ENCODE measurements at regions of chr7 and their contacts with region 1.

Region 1: GRCh38 chr7:73738612-73739374 is at the start of gene ABHD11:
- DNase-seq: peak; percentile 95
- H3K4me3 Mint-ChIP-seq: peak within 1 kb of the TSS; percentile 94
- H3K27ac Mint-ChIP-seq: peak within 1 kb of the TSS; percentile 93
- H3K4me1 Mint-ChIP-seq: peaks cover 14% of the 10 kb centered on the region
- H3K27me3 Mint-ChIP-seq: peaks cover 2% of the 10 kb centered on the region
- total RNA-seq, gene ABHD11: 18.9 and 24.3 TPM in 2 replicates

Region 2: GRCh38 chr7:73522105-73522872 is 216.5 kb before region 1 on chr7 and contains the start of gene BAZ1B:
- intact Hi-C with region 1: loop called (anchors 1 kb)
- DNase-seq: peak; percentile 97
- H3K4me3 Mint-ChIP-seq: peak within 1 kb of the TSS; percentile 91
- H3K27ac Mint-ChIP-seq: peak within 1 kb of the TSS; percentile 97
- H3K4me1 Mint-ChIP-seq: peaks cover 60% of the 10 kb centered on the region
- H3K27me3 Mint-ChIP-seq: no peaks in the 10 kb centered on the region
- total RNA-seq, gene BAZ1B: 110 and 111 TPM in 2 replicates

Region 3: DNA sequence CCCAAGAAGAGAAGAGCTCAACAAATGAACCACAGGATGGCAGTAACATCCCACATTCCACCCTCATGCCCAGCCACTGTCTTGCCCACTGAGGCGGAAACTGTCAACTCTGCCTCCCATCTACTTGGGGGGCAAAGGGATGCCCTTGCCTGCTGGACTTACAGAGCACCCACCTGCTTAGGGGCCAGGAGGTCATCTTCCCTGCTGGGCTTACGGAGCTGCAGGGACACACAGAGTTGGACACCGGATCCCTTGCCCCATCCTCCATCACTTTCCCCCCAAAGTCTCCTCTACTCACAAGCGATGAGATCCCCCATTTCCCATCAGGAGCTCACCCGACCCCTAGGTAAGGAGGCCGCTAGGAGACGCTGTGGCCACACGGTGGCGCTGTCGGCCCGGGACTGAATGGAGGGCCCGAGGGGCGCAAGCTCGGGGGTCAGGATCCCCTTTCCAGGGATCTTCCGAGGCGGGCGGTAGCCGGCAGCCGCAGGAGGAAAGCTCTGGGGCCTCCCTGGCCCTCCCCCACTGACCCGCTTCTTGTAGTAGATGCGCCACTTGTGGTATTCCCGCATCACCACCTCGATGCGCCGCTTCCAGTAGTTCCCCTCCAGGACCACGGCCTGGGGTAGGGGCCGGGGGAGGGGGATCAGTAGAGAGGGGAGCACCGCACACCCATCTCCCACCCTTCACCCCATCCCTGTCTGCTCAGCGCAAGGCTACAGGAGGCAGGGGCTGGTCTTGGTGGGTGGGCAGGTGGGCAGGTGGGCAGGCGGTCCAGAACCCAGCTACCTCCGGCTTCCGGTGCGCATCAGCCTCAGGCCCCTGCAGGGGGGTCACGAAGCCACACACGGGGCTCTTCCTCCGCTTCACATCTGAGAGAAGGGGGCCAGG is 131.7 kb before region 1 on chr7:
- intact Hi-C with region 1: loop called (anchors 2 kb)
- DNase-seq: peak; percentile 42
- H3K4me3 Mint-ChIP-seq: no peak overlapping the region
- H3K27ac Mint-ChIP-seq: no peak overlapping the region
- H3K4me1 Mint-ChIP-seq: no peaks in the 10 kb centered on the region
- H3K27me3 Mint-ChIP-seq: peaks cover 17% of the 10 kb centered on the region

Region 4: GRCh38 chr7:73683056-73683964 is 55.5 kb before region 1 on chr7 and contains the starts of genes BUD23 and DNAJC30:
- intact Hi-C with region 1: loop called (anchors 1 kb)
- DNase-seq: peak; percentile 87
- H3K4me3 Mint-ChIP-seq: peak within 1 kb of the TSS; percentile 99
- H3K27ac Mint-ChIP-seq: peak within 1 kb of the TSS; percentile 90
- H3K4me1 Mint-ChIP-seq: peaks cover 26% of the 10 kb centered on the region
- H3K27me3 Mint-ChIP-seq: no peaks in the 10 kb centered on the region
- total RNA-seq, gene BUD23: 128 and 138 TPM in 2 replicates
- total RNA-seq, gene DNAJC30: 11.2 and 11.6 TPM in 2 replicates

Region 5: GRCh38 chr7:73851410-73852234 is 112.8 kb after region 1 on chr7:
- intact Hi-C with region 1: loop called (anchors 1 kb)
- DNase-seq: no peak
- H3K4me3 Mint-ChIP-seq: no peak overlapping the region
- H3K27ac Mint-ChIP-seq: peak overlapping the region; percentile 15
- H3K4me1 Mint-ChIP-seq: peaks cover 26% of the 10 kb centered on the region
- H3K27me3 Mint-ChIP-seq: peaks cover 12% of the 10 kb centered on the region

Region 6: GRCh38 chr7:75591467-75592255 is 1852.9 kb after region 1 on chr7:
- intact Hi-C with region 1: loop called (anchors 5 kb)
- DNase-seq: no peak
- H3K4me3 Mint-ChIP-seq: no peak overlapping the region
- H3K27ac Mint-ChIP-seq: peak overlapping the region; percentile 58
- H3K4me1 Mint-ChIP-seq: peaks cover 11% of the 10 kb centered on the region
- H3K27me3 Mint-ChIP-seq: no peaks in the 10 kb centered on the region